ENCODE measurements at regions of chr14 and their contacts with region 1.

Region 1: GRCh38 chr14:72904840-72905561 is 11.1 kb upstream of the DPF3 start:
- DNase-seq: peak; percentile 71
- H3K4me3 Mint-ChIP-seq: no peak overlapping the region
- H3K27ac Mint-ChIP-seq: no peak overlapping the region
- H3K4me1 Mint-ChIP-seq: no peaks in the 10 kb centered on the region
- H3K27me3 Mint-ChIP-seq: peaks cover 6% of the 10 kb centered on the region

Region 2: GRCh38 chr14:72882463-72882862 is 22.5 kb before region 1 on chr14:
- CTCF ChIA-PET with region 1: no interaction called
- POLR2A ChIA-PET with region 1: no interaction called
- intact Hi-C with region 1: no loop called
- DNase-seq: no peak
- H3K4me3 Mint-ChIP-seq: no peak overlapping the region
- H3K27ac Mint-ChIP-seq: no peak overlapping the region
- H3K4me1 Mint-ChIP-seq: peaks cover 5% of the 10 kb centered on the region
- H3K27me3 Mint-ChIP-seq: peaks cover 3% of the 10 kb centered on the region

Region 3: DNA sequence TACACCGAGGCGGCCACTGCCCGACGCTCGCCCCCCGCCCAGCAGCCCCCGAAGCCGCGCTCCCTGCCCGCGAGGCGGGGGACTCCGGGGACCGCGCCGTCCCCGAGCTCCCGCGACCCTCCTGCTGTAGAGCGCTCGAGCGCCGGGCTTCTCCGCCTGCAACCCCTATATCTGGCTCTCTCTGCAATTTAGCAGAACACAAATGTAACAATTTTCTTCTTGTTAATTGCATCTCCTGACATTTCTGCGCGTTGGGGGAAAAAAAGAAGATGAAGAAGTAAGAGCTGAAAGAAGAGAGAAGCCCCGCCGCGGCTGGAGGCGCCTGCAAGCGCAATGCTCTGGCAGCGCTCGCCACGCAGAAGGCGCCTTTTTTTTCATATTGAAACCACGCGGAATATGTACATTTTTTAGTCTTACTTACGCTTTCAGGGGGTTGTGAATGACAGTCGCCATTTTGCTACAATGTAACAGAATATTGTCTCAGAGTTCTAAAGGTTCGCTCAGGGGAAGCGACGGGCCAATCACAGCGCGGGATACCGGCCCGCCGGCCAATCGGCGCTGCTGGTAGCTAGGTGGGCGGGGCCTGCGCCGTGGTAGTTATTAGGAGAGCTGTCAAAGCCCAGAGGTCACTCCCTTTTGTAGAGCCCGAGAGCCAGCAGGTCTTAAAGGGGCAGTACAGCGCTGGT is 11.2 kb before region 1 on chr14 and contains the start of gene DPF3:
- CTCF ChIA-PET with region 1: interaction called, 20 read pairs
- POLR2A ChIA-PET with region 1: no interaction called
- intact Hi-C with region 1: no loop called
- DNase-seq: peak; percentile 94
- H3K4me3 Mint-ChIP-seq: peak within 1 kb of the TSS; percentile 88
- H3K27ac Mint-ChIP-seq: peak within 1 kb of the TSS; percentile 40
- H3K4me1 Mint-ChIP-seq: peaks cover 20% of the 10 kb centered on the region
- H3K27me3 Mint-ChIP-seq: peaks cover 43% of the 10 kb centered on the region
- total RNA-seq, gene DPF3: 0.24 to 0.39 TPM

Region 4: DNA sequence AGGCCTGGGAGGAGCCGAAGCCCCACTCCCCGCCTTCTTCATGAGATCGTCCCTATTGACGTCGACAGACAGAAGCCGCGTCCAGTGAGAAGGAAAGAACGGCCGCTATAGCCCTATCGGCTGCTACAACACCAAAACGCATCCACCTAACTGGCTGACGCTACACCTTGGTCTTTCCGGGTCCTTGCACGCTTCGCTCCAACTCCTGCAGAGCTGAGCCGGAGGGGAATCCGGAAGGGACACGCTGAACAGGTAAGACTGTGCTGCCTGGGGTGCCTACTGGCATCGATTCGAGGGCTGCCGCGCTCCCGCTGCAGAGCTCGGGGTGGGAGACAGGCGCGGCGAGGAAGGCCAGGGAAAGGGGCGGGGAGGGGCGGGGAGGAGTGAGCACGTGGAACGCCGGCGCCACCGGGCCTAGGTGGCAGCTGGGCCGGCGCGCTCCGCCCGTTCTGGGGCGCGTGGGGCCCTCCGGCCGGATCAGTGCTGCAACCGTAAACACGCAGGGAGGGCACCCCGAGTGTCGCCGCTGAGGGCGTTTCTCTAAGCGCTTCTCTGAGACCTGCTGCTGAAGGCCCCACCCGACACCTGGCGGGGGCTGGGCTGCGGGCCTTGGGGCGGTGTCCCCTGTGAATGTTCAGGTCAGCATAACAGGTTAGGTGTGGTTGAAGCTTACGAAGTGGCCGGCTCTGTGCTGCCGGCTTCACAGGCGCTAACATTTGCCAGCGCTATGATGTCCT is 21.5 kb after region 1 on chr14 and contains the start of gene DCAF4:
- CTCF ChIA-PET with region 1: interaction called, 15 read pairs
- POLR2A ChIA-PET with region 1: no interaction called
- intact Hi-C with region 1: no loop called
- DNase-seq: peak; percentile 97
- H3K4me3 Mint-ChIP-seq: peak within 1 kb of the TSS; percentile 91
- H3K27ac Mint-ChIP-seq: peak within 1 kb of the TSS; percentile 69
- H3K4me1 Mint-ChIP-seq: peaks cover 18% of the 10 kb centered on the region
- H3K27me3 Mint-ChIP-seq: peaks cover 2% of the 10 kb centered on the region
- total RNA-seq, gene DCAF4: 13.4 to 13.6 TPM

Region 5: GRCh38 chr14:72948481-72949138 is 43.6 kb after region 1 on chr14:
- CTCF ChIA-PET with region 1: interaction called, 21 read pairs
- POLR2A ChIA-PET with region 1: no interaction called
- intact Hi-C with region 1: no loop called
- DNase-seq: peak; percentile 75
- H3K4me3 Mint-ChIP-seq: no peak overlapping the region
- H3K27ac Mint-ChIP-seq: no peak overlapping the region
- H3K4me1 Mint-ChIP-seq: no peaks in the 10 kb centered on the region
- H3K27me3 Mint-ChIP-seq: no peaks in the 10 kb centered on the region